Aorta (tissue), 5 donors: ENCODE measurements at regions of chr16 and their contacts with region 1.

Region 1: DNA sequence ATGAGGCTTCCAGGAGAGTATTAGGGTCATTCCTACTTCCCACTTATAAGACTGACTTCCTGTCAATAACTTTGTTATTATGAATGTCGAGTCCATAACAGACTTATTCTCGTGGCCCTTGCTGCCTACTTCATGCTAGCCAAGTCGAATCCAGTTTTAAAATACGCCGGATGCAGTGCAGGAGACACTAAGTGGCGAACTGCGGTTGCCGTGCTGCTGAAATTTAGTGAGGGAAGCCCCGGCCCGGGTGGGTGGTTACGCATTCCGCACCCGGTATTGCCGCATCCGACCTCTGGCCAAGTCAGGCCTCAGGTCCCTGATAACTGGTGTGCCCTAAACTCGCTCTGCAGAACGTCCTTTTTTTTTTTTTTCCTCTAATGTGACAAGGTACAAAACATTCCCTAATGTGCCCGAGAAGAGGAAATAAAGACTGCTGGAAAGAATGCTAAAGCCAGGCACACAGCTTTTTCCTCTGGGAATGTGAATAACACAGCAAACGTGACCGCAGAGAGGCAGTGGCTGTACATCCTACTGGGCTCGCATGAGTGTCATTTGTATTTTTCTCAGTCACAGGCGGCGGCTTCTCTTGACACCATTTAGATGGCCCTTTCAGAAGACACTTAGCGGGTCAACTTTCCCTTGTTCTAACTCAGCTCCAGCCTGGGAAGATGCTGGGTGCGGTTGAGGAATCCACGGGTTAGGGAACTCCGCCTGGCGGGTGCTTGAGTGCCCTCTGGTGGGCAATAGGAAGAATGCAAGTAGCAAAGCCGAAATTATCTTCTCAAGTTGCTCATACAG is 7.1 kb upstream of the AKTIP start:
- DNase-seq: peak; percentile 74 to 85
- ATAC-seq: peak; percentile 91
- H3K4me3 ChIP-seq: no peak overlapping the region
- H3K27ac ChIP-seq: peak overlapping the region in 1 of 2 donors; percentile 85
- H3K4me1 ChIP-seq: no peaks in the 10 kb centered on the region
- H3K27me3 ChIP-seq: no peaks in the 10 kb centered on the region

Region 2: DNA sequence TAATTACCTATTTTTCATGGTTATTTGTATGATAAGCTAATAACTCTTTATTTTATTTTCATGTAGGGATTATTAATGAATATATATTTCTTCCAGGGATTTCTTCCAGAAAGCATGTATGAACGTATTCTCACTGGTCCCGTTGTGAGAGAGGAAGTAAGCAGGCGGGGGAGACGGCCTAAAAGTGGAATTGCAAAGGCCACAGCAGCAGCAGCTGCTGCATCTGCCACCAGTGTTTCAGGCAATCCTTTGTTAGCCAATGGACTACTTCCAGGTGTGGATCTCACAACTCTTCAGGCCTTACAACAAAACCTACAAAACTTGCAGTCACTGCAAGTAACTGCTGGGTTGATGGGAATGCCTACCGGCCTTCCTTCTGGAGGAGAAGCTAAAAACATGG is 186.2 kb before region 1 on chr16:
- intact Hi-C with region 1: loop called in 1 of 2 experiments (anchors 10 kb)
- DNase-seq: no peak
- ATAC-seq: no peak
- H3K4me3 ChIP-seq: no peak overlapping the region
- H3K27ac ChIP-seq: no peak overlapping the region
- H3K4me1 ChIP-seq: no peaks in the 10 kb centered on the region
- H3K27me3 ChIP-seq: no peaks in the 10 kb centered on the region

Region 3: GRCh38 chr16:53435066-53435688 is 74.9 kb before region 1 on chr16:
- intact Hi-C with region 1: loop called in 1 of 2 experiments (anchors 2 kb)
- DNase-seq: peak; percentile 78 to 79
- ATAC-seq: peak; percentile 90
- H3K4me3 ChIP-seq: peak overlapping the region; percentile 60 to 80
- H3K27ac ChIP-seq: peak overlapping the region; percentile 29 to 89
- H3K4me1 ChIP-seq: no peaks in the 10 kb centered on the region
- H3K27me3 ChIP-seq: no peaks in the 10 kb centered on the region

Region 4: GRCh38 chr16:53703590-53704444 is 193.7 kb after region 1 on chr16 and contains the starts of genes FTO and RPGRIP1L:
- intact Hi-C with region 1: loop called in 1 of 2 experiments (anchors 5 kb)
- DNase-seq: peak; percentile 99
- ATAC-seq: peak; percentile 100
- H3K4me3 ChIP-seq: peak within 1 kb of the TSS; percentile 50 to 66
- H3K27ac ChIP-seq: no peak within 1 kb of the TSS
- H3K4me1 ChIP-seq: peaks cover 0 to 5% of the 10 kb centered on the region in 2 donors
- H3K27me3 ChIP-seq: no peaks in the 10 kb centered on the region
- total RNA-seq, gene FTO: 84.5 to 97.7 TPM
- total RNA-seq, gene RPGRIP1L: 4.6 to 7.3 TPM